ENCODE measurements at regions of chr5 and their contacts with region 1.

Region 1: DNA sequence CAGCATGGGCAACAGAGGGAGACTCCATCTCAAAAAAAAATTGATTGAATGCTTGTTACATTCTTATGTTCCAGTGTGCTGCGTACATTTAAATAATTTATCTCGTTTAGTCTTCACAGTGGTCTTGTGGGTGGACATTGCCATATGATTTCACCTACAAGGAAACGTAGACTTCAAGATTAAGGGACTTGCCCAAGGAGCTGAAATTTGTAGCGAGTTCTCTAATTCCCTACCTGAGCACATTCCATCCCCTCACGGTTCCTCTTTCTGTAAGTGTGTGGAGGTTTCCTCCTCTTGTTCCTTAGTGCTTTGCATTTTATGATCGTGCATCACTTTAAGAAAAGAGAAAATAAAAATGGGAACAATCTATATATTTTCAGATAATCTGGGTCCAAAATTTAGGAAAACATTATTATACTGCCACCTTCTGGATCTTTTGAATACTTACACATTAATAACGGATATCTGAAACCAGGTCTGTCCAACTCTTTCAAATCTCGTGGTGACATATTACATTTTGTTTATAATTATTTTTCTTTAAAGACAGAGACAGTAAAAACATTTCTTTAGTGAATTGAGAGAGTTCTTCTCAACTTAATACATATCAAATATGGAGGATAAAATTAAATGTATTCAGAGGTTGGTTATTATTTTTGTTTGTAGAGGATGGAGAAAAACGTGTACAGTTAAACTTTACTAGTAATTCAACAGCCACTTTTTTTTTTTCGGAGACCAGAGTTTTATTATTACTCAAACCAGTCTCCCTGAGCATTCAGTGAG is 29.9 kb upstream of the C7 start:
- DNase-seq: no peak
- H3K4me3 Mint-ChIP-seq: no peak overlapping the region
- H3K27ac Mint-ChIP-seq: no peak overlapping the region
- H3K4me1 Mint-ChIP-seq: peaks cover 4% of the 10 kb centered on the region
- H3K27me3 Mint-ChIP-seq: no peaks in the 10 kb centered on the region

Region 2: GRCh38 chr5:39714036-39714698 is 1165.2 kb before region 1 on chr5:
- CTCF ChIA-PET with region 1: interaction called, 9 read pairs
- intact Hi-C with region 1: loop called (anchors 1 kb)
- DNase-seq: peak; percentile 66
- H3K4me3 Mint-ChIP-seq: no peak overlapping the region
- H3K27ac Mint-ChIP-seq: no peak overlapping the region
- H3K4me1 Mint-ChIP-seq: no peaks in the 10 kb centered on the region
- H3K27me3 Mint-ChIP-seq: no peaks in the 10 kb centered on the region

Region 3: GRCh38 chr5:40502736-40503135 is 376.6 kb before region 1 on chr5:
- CTCF ChIA-PET with region 1: no interaction called
- intact Hi-C with region 1: loop called (anchors 10 kb)
- DNase-seq: no peak
- H3K4me3 Mint-ChIP-seq: no peak overlapping the region
- H3K27ac Mint-ChIP-seq: no peak overlapping the region
- H3K4me1 Mint-ChIP-seq: peaks cover 24% of the 10 kb centered on the region
- H3K27me3 Mint-ChIP-seq: no peaks in the 10 kb centered on the region

Region 4: DNA sequence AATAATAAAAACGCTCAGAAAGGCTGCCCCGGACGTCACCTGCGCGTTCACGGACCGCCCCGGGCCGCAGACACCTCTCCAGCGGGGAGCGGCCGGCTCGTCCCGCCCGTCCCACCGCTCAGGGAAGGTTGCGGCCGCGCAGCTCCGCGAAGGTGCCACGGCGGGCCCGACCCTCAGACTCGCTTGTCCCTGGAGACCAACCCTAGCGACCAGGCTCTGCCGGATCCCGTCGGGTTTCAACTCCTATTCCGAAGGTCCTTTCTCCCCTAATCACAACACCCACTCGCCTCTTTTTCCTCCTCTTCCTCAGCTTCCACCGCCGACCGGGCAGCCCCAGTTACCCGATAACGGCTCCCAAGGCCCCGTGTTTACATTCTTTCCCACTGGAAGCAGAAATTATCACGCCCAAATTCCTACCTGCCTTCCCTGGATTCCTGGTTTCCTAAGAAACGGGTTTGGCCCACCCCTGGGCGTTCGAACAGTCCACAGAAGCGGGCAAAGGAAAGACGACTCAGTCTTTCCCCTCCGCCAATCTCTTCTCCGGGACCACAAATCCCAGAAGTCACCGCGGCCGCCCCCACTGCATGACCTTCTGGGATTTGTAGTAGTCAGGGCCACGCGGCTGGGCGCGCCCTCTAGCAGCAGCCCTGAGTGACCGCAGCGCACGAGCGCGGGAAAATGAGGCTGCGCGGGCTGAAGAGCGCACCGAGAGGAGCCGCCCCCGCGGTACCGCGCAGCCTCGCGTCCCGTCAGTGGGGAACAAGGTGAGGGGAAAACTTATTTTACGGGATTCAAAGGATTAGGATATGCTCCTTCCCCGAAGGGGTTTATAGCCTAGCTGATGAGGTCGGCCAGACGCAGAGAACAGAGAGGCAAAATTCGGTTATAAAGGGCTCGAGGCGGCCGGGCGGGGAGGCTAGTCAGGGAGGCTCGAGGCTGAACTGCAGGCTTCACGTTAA is 123.7 kb before region 1 on chr5 and contains the start of gene TTC33:
- CTCF ChIA-PET with region 1: no interaction called
- intact Hi-C with region 1: loop called (anchors 1 kb)
- DNase-seq: peak; percentile 98
- H3K4me3 Mint-ChIP-seq: no peak within 1 kb of the TSS
- H3K27ac Mint-ChIP-seq: no peak within 1 kb of the TSS
- H3K4me1 Mint-ChIP-seq: peaks cover 10% of the 10 kb centered on the region
- H3K27me3 Mint-ChIP-seq: no peaks in the 10 kb centered on the region
- total RNA-seq, gene TTC33: 24.4 to 27.4 TPM

Region 5: DNA sequence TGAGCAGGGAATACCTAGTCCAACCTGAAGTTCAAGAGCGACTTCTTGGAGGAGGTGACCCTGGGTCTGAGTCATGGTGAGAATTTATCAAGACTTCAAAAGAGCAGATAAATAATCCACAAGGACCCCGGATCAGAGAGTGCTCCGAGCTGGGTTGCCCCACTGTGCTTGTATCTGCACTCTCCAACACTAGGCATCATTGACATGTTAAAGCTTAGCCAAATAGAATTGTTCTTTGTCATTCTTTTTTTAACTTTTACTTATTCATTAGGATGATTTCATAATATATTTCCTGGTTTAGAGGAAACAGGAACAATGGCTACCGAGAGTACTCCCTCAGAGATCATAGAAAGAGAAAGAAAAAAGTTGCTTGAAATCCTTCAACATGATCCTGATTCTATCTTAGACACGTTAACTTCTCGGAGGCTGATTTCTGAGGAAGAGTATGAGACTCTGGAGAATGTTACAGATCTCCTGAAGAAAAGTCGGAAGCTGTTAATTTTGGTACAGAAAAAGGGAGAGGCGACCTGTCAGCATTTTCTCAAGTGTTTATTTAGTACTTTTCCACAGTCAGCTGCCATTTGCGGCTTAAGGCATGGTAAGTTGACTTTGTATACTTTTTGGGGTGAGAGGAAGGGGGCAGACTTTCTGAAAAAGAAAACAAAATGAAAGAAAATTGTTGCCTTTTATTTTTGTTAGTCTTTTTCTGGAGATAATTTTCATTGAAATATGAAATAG is 38.1 kb before region 1 on chr5 and contains the start of gene CARD6:
- CTCF ChIA-PET with region 1: interaction called, 3 read pairs
- intact Hi-C with region 1: loop called (anchors 5 kb)
- DNase-seq: no peak
- H3K4me3 Mint-ChIP-seq: peak within 1 kb of the TSS; percentile 76
- H3K27ac Mint-ChIP-seq: peak within 1 kb of the TSS; percentile 77
- H3K4me1 Mint-ChIP-seq: peaks cover 11% of the 10 kb centered on the region
- H3K27me3 Mint-ChIP-seq: peaks cover 8% of the 10 kb centered on the region
- total RNA-seq, gene CARD6: 1.3 to 1.4 TPM

Region 6: GRCh38 chr5:42566652-42567295 is 1687.4 kb after region 1 on chr5:
- CTCF ChIA-PET with region 1: no interaction called
- intact Hi-C with region 1: no loop called
- DNase-seq: no peak
- H3K4me3 Mint-ChIP-seq: no peak overlapping the region
- H3K27ac Mint-ChIP-seq: no peak overlapping the region
- H3K4me1 Mint-ChIP-seq: no peaks in the 10 kb centered on the region
- H3K27me3 Mint-ChIP-seq: peaks cover 8% of the 10 kb centered on the region